Activated naive CD4-positive, alpha-beta T cell treated with anti-CD3 and anti-CD28 coated beads for 36 hours (primary cell): ENCODE measurements at regions of chr21 and their contacts with region 1.

Region 1: GRCh38 chr21:42233067-42233961 is 14.4 kb downstream of the ABCG1 start:
- DNase-seq: peak; percentile 95
- H3K4me3 Mint-ChIP-seq: peak overlapping the region; percentile 72
- H3K27ac Mint-ChIP-seq: peak overlapping the region; percentile 95
- H3K4me1 Mint-ChIP-seq: peaks cover 95% of the 10 kb centered on the region
- H3K27me3 Mint-ChIP-seq: no peaks in the 10 kb centered on the region

Region 2: DNA sequence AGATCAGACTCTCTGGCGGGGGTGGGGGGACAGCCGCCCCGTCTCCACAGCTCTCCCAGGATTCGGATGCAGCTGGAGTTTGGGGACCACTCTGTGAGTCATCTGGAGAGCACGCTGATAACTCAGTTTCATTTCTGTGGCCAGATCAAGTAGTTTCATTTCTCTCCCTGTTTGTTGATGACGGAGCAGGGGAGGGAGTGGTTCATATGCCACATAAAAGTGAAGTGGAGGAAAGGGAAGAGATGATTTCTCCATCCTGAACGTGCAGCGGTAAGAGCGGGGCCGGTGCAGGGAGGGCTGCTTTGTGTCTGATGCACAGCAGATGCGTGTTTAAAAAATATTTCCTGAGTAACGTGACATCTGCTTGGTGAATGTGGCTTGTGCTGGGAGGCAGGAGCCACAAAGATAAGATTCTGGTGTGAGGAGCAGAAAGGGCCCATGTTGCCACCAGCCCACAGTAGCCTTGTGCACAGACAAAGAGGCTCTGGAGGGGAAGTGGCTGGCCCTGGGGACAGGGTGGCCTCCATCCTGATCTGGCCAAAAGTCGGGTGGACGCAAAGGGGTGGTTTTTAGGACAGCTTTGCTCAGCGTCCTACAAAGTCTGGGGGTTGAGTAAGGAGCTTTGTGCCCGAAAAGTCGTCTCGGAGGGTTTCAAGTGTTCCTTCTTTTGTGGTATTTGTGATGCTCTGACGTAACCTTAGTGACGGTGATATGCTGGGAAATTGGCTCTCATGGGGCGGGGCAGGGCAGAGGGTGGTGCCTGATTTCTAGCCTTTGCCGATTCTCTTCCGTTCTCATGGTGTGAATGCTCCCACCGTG is 871.3 kb before region 1 on chr21 and contains the start of gene MX2:
- CTCF ChIA-PET with region 1: no interaction called
- intact Hi-C with region 1: loop called (anchors 5 kb)
- DNase-seq: peak; percentile 89
- H3K4me3 Mint-ChIP-seq: peak within 1 kb of the TSS; percentile 80
- H3K27ac Mint-ChIP-seq: peak within 1 kb of the TSS; percentile 97
- H3K4me1 Mint-ChIP-seq: peaks cover 57% of the 10 kb centered on the region
- H3K27me3 Mint-ChIP-seq: no peaks in the 10 kb centered on the region
- total RNA-seq, gene MX2: 32.5 to 33.4 TPM

Region 3: GRCh38 chr21:42002421-42002958 is 230.8 kb before region 1 on chr21:
- CTCF ChIA-PET with region 1: no interaction called
- intact Hi-C with region 1: loop called (anchors 2 kb)
- DNase-seq: peak; percentile 89
- H3K4me3 Mint-ChIP-seq: peak overlapping the region; percentile 27
- H3K27ac Mint-ChIP-seq: peak overlapping the region; percentile 86
- H3K4me1 Mint-ChIP-seq: peaks cover 62% of the 10 kb centered on the region
- H3K27me3 Mint-ChIP-seq: no peaks in the 10 kb centered on the region

Region 4: DNA sequence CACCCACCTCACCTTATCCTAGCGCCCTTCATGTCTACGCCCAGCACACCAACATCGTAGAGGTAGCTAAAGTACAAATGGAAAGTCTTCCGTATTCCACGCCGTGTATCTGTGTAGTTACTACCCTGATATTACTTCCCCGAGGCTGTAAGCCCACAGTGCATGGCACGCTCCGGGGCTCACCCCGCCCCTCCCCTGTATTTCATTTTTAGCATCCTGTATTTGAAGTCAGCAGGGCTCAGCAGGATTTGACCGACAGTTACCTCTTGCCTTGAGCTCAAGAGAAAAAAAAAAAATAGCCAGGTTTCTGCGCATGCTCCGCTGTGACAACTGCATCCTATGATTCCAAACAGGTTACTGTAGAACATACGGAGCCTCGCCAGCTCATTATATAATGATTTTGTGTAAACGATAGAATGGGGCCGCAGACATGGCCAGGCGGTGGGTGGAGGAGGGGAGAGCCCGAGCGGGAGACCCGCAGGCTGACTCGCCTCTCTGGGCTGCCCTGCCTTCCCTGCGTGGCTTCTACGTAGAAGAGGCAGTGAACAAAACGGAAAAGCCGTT is 13.1 kb before region 1 on chr21:
- CTCF ChIA-PET with region 1: interaction called, 58 read pairs
- intact Hi-C with region 1: loop called (anchors 1 kb)
- DNase-seq: peak; percentile 86
- H3K4me3 Mint-ChIP-seq: peak overlapping the region; percentile 82
- H3K27ac Mint-ChIP-seq: peak overlapping the region; percentile 87
- H3K4me1 Mint-ChIP-seq: peaks cover 14% of the 10 kb centered on the region
- H3K27me3 Mint-ChIP-seq: no peaks in the 10 kb centered on the region

Region 5: DNA sequence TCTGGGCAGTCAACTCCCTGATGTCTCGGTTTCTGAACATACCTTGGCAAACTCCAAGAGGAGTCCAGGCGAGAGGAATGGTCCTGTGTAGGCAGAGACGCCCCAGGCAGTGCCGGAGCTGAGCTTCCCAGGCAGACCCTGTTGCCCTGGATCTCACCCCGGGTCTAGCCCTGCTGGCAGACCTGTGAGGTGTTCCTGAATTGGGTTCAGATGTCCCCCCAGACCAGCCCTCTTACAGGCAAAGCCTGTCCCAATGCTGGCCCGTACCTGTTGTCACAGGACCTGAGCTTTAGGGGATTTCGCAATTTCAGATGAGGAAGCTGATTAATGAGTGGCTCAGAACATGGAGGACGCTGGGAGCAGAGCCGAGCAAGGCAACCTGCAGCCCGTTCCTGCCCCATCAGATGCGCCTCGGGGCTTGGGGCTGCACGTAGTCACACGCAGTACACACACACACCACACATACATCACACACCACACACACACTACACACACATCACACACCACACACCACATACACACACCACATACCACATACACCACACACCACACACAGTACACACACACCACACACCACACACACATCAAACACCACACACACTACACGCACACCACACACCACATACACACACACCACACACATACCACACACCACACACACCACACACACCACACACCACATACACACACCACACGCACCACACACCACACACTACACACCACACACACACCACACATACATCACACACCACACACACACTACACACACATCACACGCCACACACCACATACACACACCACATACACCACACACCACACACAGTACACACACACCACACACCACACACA is 381.7 kb after region 1 on chr21:
- CTCF ChIA-PET with region 1: no interaction called
- intact Hi-C with region 1: loop called (anchors 5 kb)
- DNase-seq: peak; percentile 84
- H3K4me3 Mint-ChIP-seq: no peak overlapping the region
- H3K27ac Mint-ChIP-seq: no peak overlapping the region
- H3K4me1 Mint-ChIP-seq: peaks cover 6% of the 10 kb centered on the region
- H3K27me3 Mint-ChIP-seq: no peaks in the 10 kb centered on the region